A673 (cell line): ENCODE measurements at regions of chr6 and their contacts with region 1.

Region 1: GRCh38 chr6:159862103-159862502 is 28.7 kb upstream of the MAS1 start:
- DNase-seq: no peak
- H3K4me3 ChIP-seq: no peak overlapping the region
- H3K27ac ChIP-seq: no peak overlapping the region
- H3K4me1 ChIP-seq: no peaks in the 10 kb centered on the region
- H3K27me3 ChIP-seq: peaks cover 14% of the 10 kb centered on the region
- CTCF ChIP-seq: no peak

Region 2: DNA sequence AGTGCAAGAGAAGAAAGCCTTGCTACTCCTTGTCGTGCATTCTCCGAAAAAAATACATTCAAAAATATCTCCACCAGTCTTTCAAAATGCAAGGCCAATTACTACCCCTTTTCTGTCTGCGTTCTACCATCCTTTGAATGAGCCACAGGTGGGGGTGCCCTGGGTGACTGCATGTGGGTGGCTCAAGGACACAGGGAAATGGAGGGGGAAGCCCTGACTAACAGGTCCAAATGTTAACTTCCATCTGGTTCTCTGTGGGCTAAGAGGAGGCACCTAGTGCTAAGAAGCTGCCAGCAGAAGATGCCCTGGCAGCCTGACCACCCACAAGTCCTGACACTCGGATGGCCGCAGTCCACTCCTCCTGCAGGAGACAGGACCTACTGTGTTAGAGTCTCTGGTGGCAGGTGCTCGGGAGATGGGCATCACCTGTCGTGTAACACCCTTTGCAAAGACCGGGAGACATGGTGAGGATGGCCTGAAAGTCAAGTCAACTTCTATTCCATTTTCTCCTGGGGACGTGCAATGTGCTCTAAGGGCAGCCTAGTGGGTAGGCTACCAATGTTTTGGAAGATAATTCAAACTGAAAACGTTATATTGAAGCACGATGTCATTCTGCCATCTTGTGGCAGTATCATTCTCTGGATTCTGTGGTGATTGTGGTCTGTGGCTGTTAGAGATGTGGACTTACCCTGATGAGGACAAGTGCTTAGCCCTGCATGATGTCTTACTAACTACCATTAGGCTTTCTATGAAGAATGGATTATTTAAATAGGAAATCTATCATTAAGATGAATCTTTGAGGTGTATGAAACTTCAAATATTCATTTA is 79.4 kb after region 1 on chr6:
- CTCF ChIA-PET with region 1: interaction called, 3 read pairs
- POLR2A ChIA-PET with region 1: no interaction called
- intact Hi-C with region 1: loop called (anchors 1 kb)
- DNase-seq: peak; percentile 38
- H3K4me3 ChIP-seq: no peak overlapping the region
- H3K27ac ChIP-seq: no peak overlapping the region
- H3K4me1 ChIP-seq: no peaks in the 10 kb centered on the region
- H3K27me3 ChIP-seq: peaks cover 3% of the 10 kb centered on the region
- CTCF ChIP-seq: peak; percentile 55

Region 3: GRCh38 chr6:160088069-160088783 is 226.1 kb after region 1 on chr6:
- CTCF ChIA-PET with region 1: interaction called, 11 read pairs
- POLR2A ChIA-PET with region 1: interaction called, 3 read pairs
- intact Hi-C with region 1: no loop called
- DNase-seq: peak; percentile 52
- H3K4me3 ChIP-seq: no peak overlapping the region
- H3K27ac ChIP-seq: no peak overlapping the region
- H3K4me1 ChIP-seq: no peaks in the 10 kb centered on the region
- H3K27me3 ChIP-seq: no peaks in the 10 kb centered on the region
- CTCF ChIP-seq: peak; percentile 68

Region 4: DNA sequence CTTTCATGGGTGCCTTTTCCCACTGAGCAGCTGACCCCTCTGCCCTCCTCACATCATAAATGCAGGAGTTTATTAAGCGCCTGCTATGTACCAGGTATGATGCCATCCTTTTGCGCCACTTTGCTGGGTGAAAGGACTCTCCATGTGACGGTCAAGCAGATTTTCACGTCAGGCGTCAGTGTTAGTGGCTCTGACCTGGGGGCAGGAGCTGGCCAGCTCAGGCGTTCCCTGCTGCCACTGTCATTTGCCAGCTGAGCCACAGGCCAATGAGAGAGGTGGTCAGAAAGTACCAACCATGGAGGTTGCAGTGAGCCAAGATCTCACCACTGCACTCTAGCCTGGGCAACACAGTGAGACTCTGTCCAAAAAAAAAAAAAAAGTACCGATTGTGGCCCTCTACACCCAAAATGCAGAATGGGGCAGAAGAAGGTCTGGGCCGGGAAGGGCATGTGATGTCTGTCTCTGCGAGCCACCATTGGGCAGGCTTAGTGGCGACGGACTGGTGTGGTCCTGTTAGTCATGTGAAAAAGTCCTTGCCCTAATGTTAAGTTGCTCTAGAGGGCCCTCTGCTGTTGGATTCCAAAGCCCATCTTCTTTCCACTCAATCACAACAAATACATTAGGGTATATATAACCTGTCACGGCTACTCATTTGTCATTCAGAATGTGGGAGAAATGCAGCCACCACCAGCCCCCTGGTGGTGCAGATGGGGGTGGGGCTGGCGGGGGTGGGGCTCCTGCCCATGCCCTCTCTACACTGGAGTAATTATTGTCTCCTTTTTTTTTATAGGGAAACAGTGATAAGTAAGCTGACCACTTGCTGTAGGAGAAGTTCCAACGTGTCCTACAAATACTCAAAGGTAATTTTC is 241.1 kb after region 1 on chr6:
- CTCF ChIA-PET with region 1: interaction called, 3 read pairs
- POLR2A ChIA-PET with region 1: no interaction called
- intact Hi-C with region 1: loop called (anchors 1 kb)
- DNase-seq: peak; percentile 61
- H3K4me3 ChIP-seq: no peak overlapping the region
- H3K27ac ChIP-seq: no peak overlapping the region
- H3K4me1 ChIP-seq: no peaks in the 10 kb centered on the region
- H3K27me3 ChIP-seq: no peaks in the 10 kb centered on the region
- CTCF ChIP-seq: peak; percentile 63

Region 5: DNA sequence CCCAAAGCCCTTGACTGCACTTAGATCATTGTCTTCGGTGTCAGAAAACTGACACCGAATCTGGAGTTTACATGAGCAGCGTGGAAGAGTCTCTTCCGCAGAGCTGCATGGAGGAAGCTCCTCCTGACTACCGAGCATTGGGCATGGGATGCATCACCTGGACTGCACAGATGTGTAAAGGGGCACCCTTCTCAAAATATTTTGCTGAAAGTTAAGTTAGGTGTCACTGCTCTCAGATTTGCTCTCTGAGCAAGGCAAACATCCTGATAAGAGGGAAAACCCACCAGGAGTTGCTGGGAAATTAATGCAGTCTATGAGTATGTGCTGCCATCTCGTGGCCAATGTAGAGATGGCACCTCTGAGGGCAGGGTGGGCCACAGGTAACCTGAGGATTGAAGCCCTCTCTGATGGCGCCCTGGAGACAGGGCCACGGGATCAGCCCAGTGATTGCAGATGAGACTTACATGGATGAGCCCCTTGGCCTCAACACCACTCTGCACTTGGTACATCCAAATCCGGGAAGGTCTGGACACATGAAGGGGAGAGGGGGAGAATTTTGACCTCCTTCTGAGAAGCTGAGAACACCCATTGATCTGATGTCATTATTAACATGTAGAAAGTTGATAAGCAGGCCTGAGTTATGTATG is 672.1 kb after region 1 on chr6:
- CTCF ChIA-PET with region 1: interaction called, 4 read pairs
- POLR2A ChIA-PET with region 1: no interaction called
- intact Hi-C with region 1: loop called (anchors 1 kb)
- DNase-seq: peak; percentile 54
- H3K4me3 ChIP-seq: no peak overlapping the region
- H3K27ac ChIP-seq: no peak overlapping the region
- H3K4me1 ChIP-seq: no peaks in the 10 kb centered on the region
- H3K27me3 ChIP-seq: no peaks in the 10 kb centered on the region
- CTCF ChIP-seq: peak; percentile 91